ENCODE measurements at regions of chr20 and their contacts with region 1.

Region 1: DNA sequence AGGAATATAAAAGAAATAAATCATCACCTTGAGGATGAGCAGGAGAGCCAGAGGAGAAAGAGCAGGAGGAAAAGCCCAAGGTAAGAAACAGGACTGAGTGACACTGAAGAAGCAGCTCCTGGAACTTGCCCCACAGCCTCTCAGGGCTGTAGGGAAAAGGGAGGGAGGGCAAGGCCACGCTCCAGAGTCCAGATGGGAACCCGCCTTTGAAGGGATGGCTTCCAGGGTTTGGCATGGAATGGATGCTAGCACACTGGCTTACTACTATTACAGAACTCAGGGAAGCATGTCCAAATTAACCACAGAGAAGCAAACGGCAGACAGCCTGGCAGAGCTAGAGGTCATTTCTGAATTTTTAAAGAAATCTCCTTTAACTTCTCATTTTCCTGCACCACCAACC is 26.8 kb downstream of the RALGAPA2 start:
- DNase-seq: no peak
- H3K4me3 Mint-ChIP-seq: no peak overlapping the region
- H3K27ac Mint-ChIP-seq: no peak overlapping the region
- H3K4me1 Mint-ChIP-seq: peaks cover 61% of the 10 kb centered on the region
- H3K27me3 Mint-ChIP-seq: no peaks in the 10 kb centered on the region

Region 2: GRCh38 chr20:20706285-20706684 is 20.6 kb after region 1 on chr20:
- CTCF ChIA-PET with region 1: no interaction called
- intact Hi-C with region 1: loop called (anchors 2 kb)
- DNase-seq: no peak
- H3K4me3 Mint-ChIP-seq: no peak overlapping the region
- H3K27ac Mint-ChIP-seq: no peak overlapping the region
- H3K4me1 Mint-ChIP-seq: peaks cover 56% of the 10 kb centered on the region
- H3K27me3 Mint-ChIP-seq: no peaks in the 10 kb centered on the region

Measured in activated naive CD4-positive, alpha-beta T cell treated with anti-CD3 and anti-CD28 coated beads for 36 hours (primary cell).